Breast epithelium (tissue), 4 donors: ENCODE measurements at regions of chr3 and their contacts with region 1.

Region 1: DNA sequence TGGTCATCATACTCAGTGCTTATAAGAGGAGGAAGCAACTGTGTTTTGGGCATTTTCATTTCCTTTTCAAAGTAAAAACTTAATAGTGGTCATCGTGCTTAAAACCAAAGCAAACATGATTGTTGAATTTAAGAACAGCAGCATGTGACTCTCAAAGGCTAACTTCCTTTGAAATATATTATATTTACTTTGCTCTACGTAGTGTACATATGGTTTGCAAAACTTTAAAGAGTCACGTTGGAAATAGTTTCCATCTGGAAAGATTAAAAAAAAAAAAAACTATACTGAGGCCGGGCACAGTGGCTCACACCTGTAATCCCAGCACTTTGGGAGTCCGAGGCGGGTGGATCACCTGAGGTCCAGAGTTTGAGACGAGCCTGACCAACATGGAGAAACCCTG is 367.9 kb upstream of the BCHE start:
- DNase-seq: no peak
- H3K4me3 ChIP-seq: no peak overlapping the region
- H3K27ac ChIP-seq: no peak overlapping the region
- H3K4me1 ChIP-seq: no peaks in the 10 kb centered on the region
- H3K27me3 ChIP-seq: no peaks in the 10 kb centered on the region
- CTCF ChIP-seq: no peak
- POLR2A ChIP-seq: no peak

Region 2: DNA sequence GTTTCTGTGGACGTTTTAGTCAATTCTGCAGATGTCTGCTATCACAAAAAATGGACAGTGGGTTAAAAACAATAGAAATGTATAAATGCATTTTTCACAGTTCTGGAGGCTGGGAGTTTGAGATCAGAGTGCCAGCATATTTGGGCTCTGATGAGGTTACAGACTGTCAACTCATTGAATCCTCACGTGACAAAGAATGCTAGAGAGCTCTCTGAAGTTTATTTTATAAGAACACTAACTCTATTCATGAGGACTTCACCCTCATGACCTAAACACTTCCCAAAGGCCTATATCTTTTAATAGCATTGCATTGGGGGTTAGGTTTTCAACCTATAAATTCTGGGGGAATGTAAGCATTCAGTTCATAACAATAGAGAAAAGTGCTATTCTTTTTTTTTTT is 826.4 kb before region 1 on chr3:
- intact Hi-C with region 1: loop called (anchors 10 kb)
- DNase-seq: no peak
- H3K4me3 ChIP-seq: no peak overlapping the region
- H3K27ac ChIP-seq: no peak overlapping the region
- H3K4me1 ChIP-seq: no peaks in the 10 kb centered on the region
- H3K27me3 ChIP-seq: no peaks in the 10 kb centered on the region
- CTCF ChIP-seq: no peak
- POLR2A ChIP-seq: no peak